ENCODE measurements at regions of chr4 and their contacts with region 1.

Region 1: DNA sequence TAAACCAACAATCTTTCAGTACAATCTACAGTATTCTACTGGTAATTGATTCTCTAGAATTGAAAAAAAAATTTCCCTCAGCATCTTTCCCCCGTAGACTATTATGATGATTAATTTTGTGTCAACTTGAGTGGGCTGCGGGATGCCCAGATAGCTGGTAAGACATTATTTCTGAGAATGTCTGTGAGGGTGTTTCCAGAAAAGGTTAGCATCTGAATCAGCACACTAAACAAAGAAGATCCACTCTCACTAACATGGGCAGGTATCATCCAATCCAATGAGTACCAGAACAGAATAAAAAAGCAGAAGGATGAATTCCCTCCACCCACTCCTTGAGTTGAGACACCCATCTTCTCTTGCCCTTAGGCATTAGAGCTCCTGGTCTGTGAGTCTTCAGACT is 186.1 kb upstream of the MAB21L2 start:
- DNase-seq: no peak
- H3K4me3 Mint-ChIP-seq: no peak overlapping the region
- H3K27ac Mint-ChIP-seq: peak overlapping the region; percentile 43
- H3K4me1 Mint-ChIP-seq: peaks cover 14% of the 10 kb centered on the region
- H3K27me3 Mint-ChIP-seq: no peaks in the 10 kb centered on the region

Region 2: DNA sequence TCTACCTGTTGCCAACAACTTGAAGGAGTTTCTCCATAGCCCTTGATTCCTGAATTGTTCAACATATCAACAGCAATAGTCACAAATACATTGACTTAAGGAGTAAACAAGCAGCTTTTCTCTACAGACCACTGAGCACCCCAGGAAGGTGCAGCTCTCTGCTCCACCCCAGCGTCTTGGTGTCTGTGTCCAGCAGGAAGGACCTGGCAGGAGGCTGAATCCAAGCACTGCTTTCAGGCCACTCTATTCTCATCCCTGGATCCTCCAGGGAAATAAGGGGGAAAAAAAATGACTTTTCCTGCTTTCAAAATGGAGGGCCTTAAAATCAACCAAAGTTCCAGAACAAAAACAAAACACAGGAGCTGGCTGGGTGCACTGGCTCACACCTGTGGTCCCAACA is 25.7 kb after region 1 on chr4:
- intact Hi-C with region 1: no loop called
- DNase-seq: no peak
- H3K4me3 Mint-ChIP-seq: no peak overlapping the region
- H3K27ac Mint-ChIP-seq: no peak overlapping the region
- H3K4me1 Mint-ChIP-seq: no peaks in the 10 kb centered on the region
- H3K27me3 Mint-ChIP-seq: no peaks in the 10 kb centered on the region

Region 3: GRCh38 chr4:150436598-150437370 is 40.9 kb after region 1 on chr4:
- intact Hi-C with region 1: loop called (anchors 2 kb)
- DNase-seq: no peak
- H3K4me3 Mint-ChIP-seq: peak overlapping the region; percentile 2
- H3K27ac Mint-ChIP-seq: peak overlapping the region; percentile 20
- H3K4me1 Mint-ChIP-seq: peaks cover 8% of the 10 kb centered on the region
- H3K27me3 Mint-ChIP-seq: no peaks in the 10 kb centered on the region